Adrenal gland (tissue), 19 donors: ENCODE measurements at regions of chr3 and their contacts with region 1.

Region 1: DNA sequence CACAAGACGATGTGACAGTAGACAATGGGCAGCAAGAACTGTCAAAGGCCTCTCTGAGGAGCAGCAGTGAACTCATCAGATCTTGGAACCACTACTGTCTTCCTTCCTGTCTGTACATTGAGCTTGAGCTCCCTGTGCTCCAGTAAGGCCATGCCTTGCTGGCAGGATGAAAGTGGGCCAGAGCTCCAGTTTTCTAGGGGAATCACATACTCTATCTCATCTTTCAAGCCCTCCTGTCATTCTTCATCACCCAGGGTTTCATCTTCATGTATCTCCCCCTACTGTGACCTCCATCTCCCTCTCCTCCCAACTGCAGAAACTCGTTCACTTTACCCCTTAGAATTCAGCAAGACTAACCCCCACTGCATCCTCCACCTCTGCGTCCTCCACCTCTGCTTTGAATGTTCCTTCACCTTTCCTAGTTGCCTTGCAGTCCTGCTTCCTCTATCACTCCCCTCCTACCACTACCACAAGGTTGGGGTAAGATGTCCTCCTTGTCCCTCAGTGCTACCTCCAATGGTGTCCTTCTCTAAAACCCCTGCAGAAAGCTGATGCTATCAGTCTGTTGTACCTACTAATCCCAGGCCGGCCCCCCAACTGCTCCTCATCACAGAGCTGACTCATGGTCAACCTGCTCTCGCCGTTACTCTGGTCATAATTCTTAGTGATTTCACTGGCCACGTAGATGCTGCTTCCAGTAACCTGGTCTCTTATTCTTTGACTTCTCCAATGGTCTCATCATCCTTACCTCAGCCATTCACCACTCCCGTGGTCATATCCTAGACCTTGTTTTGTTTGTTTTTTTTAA is 22.3 kb downstream of the NKIRAS1 start:
- DNase-seq: no peak
- H3K4me3 ChIP-seq: no peak overlapping the region
- H3K27ac ChIP-seq: no peak overlapping the region
- H3K4me1 ChIP-seq: peaks cover 0 to 8% of the 10 kb centered on the region in 2 donors
- H3K27me3 ChIP-seq: no peaks in the 10 kb centered on the region
- CTCF ChIP-seq: no peak
- POLR2A ChIP-seq: no peak

Region 2: DNA sequence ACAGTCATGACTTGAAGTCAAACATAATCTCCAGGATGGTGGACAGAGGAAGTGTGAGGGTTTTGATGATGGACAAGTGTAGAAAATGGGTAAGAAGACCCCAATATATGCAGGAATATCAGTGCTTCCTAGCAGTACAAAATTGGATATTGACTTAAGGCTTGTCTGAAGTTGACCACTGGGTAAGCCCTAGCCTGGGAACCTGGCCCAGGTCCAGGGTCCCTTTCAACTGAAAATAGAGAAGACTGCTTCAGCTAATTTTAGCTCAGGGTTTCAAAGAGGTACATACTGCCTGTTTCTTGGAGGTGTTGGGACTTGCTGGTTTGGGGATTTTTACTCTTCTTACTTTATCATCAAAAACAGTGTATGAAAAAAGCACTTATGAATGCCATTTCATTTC is 55.3 kb after region 1 on chr3:
- intact Hi-C with region 1: no loop called
- DNase-seq: peak in 5 of 7 donors; percentile 22 to 67 (median 48)
- H3K4me3 ChIP-seq: peak overlapping the region in 1 of 4 donors; percentile 1
- H3K27ac ChIP-seq: peak overlapping the region in 4 of 5 donors; percentile 14 to 100 (median 44)
- H3K4me1 ChIP-seq: peaks cover 37 to 73% of the 10 kb centered on the region in 2 donors
- H3K27me3 ChIP-seq: no peaks in the 10 kb centered on the region
- CTCF ChIP-seq: no peak
- POLR2A ChIP-seq: no peak

Region 3: DNA sequence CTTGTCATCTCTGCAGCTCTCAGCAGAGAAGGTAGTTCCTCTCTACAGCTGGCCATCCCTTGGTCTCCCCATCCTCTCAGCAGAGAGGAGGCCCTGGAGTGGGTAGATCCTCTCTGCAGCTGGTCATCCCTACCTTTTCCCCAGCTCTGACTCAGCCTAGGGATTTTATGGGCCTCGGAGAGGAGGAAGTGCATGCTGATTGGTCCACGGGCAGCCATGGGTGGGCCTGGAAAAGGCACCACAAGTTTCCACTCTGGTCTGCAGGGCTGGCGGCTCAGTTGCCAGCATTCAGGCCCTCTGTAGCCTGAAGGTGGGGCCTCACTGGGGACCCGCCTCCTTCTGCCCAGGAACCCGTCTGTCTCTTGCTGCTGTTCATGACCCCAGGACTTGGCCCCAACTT is 87.5 kb after region 1 on chr3:
- intact Hi-C with region 1: loop called in 1 of 2 experiments (anchors 10 kb)
- DNase-seq: no peak
- H3K4me3 ChIP-seq: no peak overlapping the region
- H3K27ac ChIP-seq: no peak overlapping the region
- H3K4me1 ChIP-seq: peaks cover 0 to 5% of the 10 kb centered on the region in 2 donors
- H3K27me3 ChIP-seq: no peaks in the 10 kb centered on the region
- CTCF ChIP-seq: no peak
- POLR2A ChIP-seq: no peak

Region 4: GRCh38 chr3:23999012-23999641 is 104.7 kb after region 1 on chr3:
- intact Hi-C with region 1: loop called in 1 of 2 experiments (anchors 10 kb)
- DNase-seq: peak; percentile 53 to 93 (median 74)
- H3K4me3 ChIP-seq: no peak overlapping the region
- H3K27ac ChIP-seq: no peak overlapping the region
- H3K4me1 ChIP-seq: peaks cover 0 to 5% of the 10 kb centered on the region in 2 donors
- H3K27me3 ChIP-seq: no peaks in the 10 kb centered on the region
- CTCF ChIP-seq: peak; percentile 77 to 97 (median 95)
- POLR2A ChIP-seq: no peak